Heart right ventricle (tissue), 16 donors: ENCODE measurements at regions of chr19 and their contacts with region 1.

Region 1: GRCh38 chr19:16612618-16613017 is 15.4 kb downstream of the MED26 start:
- DNase-seq: no peak
- ATAC-seq: no peak
- H3K4me3 ChIP-seq: no peak overlapping the region
- H3K27ac ChIP-seq: peak overlapping the region in 9 of 10 donors; percentile 9 to 74 (median 60)
- H3K4me1 ChIP-seq: peaks cover 11 to 82% (median 57%) of the 10 kb centered on the region in 9 donors
- H3K27me3 ChIP-seq: no peaks in the 10 kb centered on the region
- CTCF ChIP-seq: no peak

Region 2: GRCh38 chr19:16509141-16510061 is 103.2 kb before region 1 on chr19:
- intact Hi-C with region 1: no loop called
- DNase-seq: peak in 1 of 2 donors; percentile 32
- ATAC-seq: peak; percentile 46 to 79 (median 72)
- H3K4me3 ChIP-seq: no peak overlapping the region
- H3K27ac ChIP-seq: peak overlapping the region in 8 of 10 donors; percentile 2 to 52 (median 38)
- H3K4me1 ChIP-seq: no peaks in the 10 kb centered on the region
- H3K27me3 ChIP-seq: no peaks in the 10 kb centered on the region
- CTCF ChIP-seq: no peak

Region 3: GRCh38 chr19:16640951-16641350 is 28.3 kb after region 1 on chr19:
- intact Hi-C with region 1: loop called in 1 of 10 experiments (anchors 1 kb)
- DNase-seq: no peak
- ATAC-seq: no peak
- H3K4me3 ChIP-seq: no peak overlapping the region
- H3K27ac ChIP-seq: no peak overlapping the region
- H3K4me1 ChIP-seq: peaks cover 0 to 15% (median 3%) of the 10 kb centered on the region in 9 donors
- H3K27me3 ChIP-seq: no peaks in the 10 kb centered on the region
- CTCF ChIP-seq: no peak